ENCODE measurements at regions of chr16 and their contacts with region 1.

Region 1: DNA sequence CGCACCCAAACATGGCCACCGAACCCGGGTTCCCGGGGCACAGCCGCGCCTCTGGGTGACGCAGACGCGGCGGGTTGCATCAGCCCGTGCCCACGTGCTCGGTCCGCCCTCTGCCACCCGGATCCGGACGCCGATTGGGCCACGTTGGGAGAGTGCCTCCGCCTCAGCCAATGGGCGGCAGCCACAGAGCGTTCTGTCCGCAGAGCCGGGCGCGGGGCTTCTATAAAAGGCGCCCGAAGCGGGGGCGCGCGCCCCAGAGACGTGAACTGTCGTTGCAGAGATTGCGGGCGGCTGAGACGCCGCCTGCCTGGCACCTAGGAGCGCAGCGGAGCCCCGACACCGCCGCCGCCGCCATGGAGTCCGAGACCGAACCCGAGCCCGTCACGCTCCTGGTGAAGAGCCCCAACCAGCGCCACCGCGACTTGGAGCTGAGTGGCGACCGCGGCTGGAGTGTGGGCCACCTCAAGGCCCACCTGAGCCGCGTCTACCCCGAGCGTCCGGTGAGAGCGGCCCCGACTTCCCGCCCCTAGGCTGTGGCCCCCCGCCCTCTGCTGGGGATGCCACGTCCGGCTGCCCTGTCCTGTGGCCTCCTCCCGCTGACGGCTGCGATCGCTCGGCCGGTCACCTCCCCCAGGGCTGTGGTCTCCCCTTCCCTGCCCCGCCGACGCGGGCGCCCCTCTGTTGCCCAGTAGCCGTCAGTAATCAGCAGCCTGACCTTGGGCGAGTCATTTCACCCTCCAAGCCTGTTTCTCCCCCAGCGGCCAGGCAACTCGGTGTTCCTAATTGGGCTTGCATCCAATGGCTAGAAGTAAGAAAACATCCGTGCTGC is at the start of gene HERPUD1:
- DNase-seq: peak; percentile 100
- H3K4me3 Mint-ChIP-seq: peak within 1 kb of the TSS; percentile 96
- H3K27ac Mint-ChIP-seq: peak within 1 kb of the TSS; percentile 97
- H3K4me1 Mint-ChIP-seq: peaks cover 35% of the 10 kb centered on the region
- H3K27me3 Mint-ChIP-seq: no peaks in the 10 kb centered on the region
- total RNA-seq, gene HERPUD1: 155 and 164 TPM in 2 replicates

Region 2: GRCh38 chr16:56729735-56730662 is 202.1 kb before region 1 on chr16 and contains the start of gene NUP93:
- intact Hi-C with region 1: loop called (anchors 5 kb)
- DNase-seq: peak; percentile 97
- H3K4me3 Mint-ChIP-seq: no peak within 1 kb of the TSS
- H3K27ac Mint-ChIP-seq: peak within 1 kb of the TSS; percentile 81
- H3K4me1 Mint-ChIP-seq: peaks cover 17% of the 10 kb centered on the region
- H3K27me3 Mint-ChIP-seq: no peaks in the 10 kb centered on the region
- total RNA-seq, gene NUP93: 162 and 168 TPM in 2 replicates

Region 3: DNA sequence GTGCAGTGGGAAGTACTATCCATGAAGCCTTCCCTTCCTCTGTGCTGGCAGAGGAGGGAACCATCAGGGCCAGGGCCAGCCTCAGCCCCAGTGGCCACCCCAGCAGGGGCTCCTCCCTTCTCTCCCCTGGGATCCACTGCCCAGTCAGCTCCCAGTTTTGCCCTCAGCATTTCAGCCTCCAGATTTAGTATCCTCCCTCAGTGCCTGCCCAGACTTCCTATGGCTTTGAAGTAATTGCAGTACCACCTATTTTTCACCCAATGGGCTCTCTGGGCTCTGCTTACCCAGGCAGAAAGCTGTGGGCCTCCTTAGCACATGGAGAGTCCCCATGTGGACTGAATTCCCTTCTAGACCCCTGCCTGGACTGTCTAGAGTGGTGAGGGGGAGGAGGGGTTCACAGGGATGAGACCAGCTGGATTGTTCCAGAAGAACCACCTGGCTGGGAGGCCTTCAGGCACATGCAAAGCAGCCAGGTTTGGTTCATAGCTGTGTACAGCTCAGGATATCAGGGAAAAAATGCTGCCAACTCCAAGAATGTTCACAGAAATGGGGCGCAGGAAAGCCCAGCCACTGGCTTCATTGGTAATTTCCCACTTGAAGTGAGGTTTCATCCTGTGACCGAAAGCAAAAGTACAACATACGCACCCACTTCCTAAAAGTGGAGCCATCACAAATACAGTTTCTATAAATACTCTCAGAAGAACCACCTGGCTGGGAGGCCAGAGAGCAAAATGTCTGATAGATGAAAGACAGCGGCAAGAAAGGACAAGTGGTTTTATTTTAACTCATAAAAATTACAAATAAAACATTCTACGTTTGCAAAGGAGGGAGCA is 15.3 kb before region 1 on chr16:
- intact Hi-C with region 1: loop called (anchors 2 kb)
- DNase-seq: peak; percentile 87
- H3K4me3 Mint-ChIP-seq: peak overlapping the region; percentile 67
- H3K27ac Mint-ChIP-seq: peak overlapping the region; percentile 87
- H3K4me1 Mint-ChIP-seq: peaks cover 47% of the 10 kb centered on the region
- H3K27me3 Mint-ChIP-seq: peaks cover 4% of the 10 kb centered on the region

Region 4: DNA sequence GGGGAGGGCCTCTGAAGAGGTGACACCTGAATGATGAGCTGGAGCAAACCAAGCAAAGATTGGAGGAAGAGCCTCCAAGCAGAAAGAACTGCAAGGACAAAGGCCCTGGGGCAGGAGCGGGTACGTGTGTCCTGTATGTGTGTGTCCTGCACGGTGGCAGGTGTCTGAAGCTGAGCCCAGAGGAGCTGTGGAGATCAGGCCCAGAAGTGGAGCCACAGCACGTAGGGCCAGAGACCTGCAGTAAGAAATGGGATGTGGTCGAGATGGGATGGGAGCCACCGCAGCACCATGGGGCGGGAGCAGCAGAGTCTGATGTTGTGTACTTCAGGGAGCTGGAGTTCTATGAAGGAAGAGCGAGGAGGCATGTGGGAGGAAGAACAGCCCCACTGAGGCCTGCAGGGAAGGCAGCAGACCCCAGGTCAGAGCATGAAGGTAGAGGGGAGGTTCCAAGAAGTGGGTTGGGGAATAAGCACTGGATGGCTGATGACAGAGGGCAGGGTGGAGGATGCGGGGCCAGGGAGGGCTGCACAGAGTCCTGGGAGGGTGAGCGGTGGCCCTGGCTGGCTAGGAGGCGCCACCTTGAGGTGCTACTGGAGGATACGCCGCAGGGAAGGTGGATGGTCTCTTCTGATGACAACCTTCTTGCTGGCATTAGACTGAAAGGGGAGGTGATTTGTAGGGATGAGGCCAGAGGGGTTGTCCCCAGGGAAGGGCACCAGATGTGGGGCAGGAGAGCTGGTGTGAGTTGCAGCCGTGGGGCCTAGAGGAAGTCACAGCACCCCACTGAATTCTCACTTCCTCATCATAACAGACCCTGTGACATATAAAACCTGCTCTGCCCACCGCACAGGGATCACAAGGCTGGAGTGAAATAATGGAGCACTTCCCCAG is 19.0 kb after region 1 on chr16:
- intact Hi-C with region 1: loop called (anchors 2 kb)
- DNase-seq: peak; percentile 87
- H3K4me3 Mint-ChIP-seq: no peak overlapping the region
- H3K27ac Mint-ChIP-seq: peak overlapping the region; percentile 66
- H3K4me1 Mint-ChIP-seq: peaks cover 17% of the 10 kb centered on the region
- H3K27me3 Mint-ChIP-seq: no peaks in the 10 kb centered on the region

Region 5: GRCh38 chr16:57003439-57004386 is 71.6 kb after region 1 on chr16:
- intact Hi-C with region 1: no loop called
- DNase-seq: no peak
- H3K4me3 Mint-ChIP-seq: no peak overlapping the region
- H3K27ac Mint-ChIP-seq: peak overlapping the region; percentile 61
- H3K4me1 Mint-ChIP-seq: peaks cover 65% of the 10 kb centered on the region
- H3K27me3 Mint-ChIP-seq: no peaks in the 10 kb centered on the region